ENCODE measurements at regions of chr3 and their contacts with region 1.

Region 1: GRCh38 chr3:195542698-195543499 is at the start of gene PPP1R2:
- DNase-seq: peak; percentile 95
- ATAC-seq: peak; percentile 90
- H3K4me3 ChIP-seq: peak within 1 kb of the TSS; percentile 75 to 95 (median 93)
- H3K4me3 Mint-ChIP-seq: peak within 1 kb of the TSS; percentile 97
- H3K27ac ChIP-seq: peak within 1 kb of the TSS; percentile 96 to 98
- H3K27ac Mint-ChIP-seq: peak within 1 kb of the TSS; percentile 96
- H3K4me1 ChIP-seq: peaks cover 58 to 65% of the 10 kb centered on the region in 2 donors
- H3K4me1 Mint-ChIP-seq: peaks cover 77% of the 10 kb centered on the region
- H3K27me3 ChIP-seq: no peaks in the 10 kb centered on the region
- H3K27me3 Mint-ChIP-seq: no peaks in the 10 kb centered on the region
- CTCF ChIP-seq: no peak
- total RNA-seq, gene PPP1R2: 73.8 and 81.8 TPM in 2 replicates

Region 2: GRCh38 chr3:195522254-195523023 is 20.5 kb before region 1 on chr3:
- CTCF ChIA-PET with region 1: interaction called, 10 read pairs
- POLR2A ChIA-PET with region 1: interaction called, 6 read pairs
- intact Hi-C with region 1: loop called (anchors 2 kb)
- DNase-seq: peak; percentile 63
- ATAC-seq: peak; percentile 33
- H3K4me3 ChIP-seq: no peak overlapping the region
- H3K4me3 Mint-ChIP-seq: no peak overlapping the region
- H3K27ac ChIP-seq: peak overlapping the region in 1 of 2 donors; percentile 34
- H3K27ac Mint-ChIP-seq: peak overlapping the region; percentile 42
- H3K4me1 ChIP-seq: peaks cover 4 to 7% of the 10 kb centered on the region in 2 donors
- H3K4me1 Mint-ChIP-seq: peaks cover 18% of the 10 kb centered on the region
- H3K27me3 ChIP-seq: no peaks in the 10 kb centered on the region
- H3K27me3 Mint-ChIP-seq: no peaks in the 10 kb centered on the region
- CTCF ChIP-seq: peak; percentile 96

Region 3: DNA sequence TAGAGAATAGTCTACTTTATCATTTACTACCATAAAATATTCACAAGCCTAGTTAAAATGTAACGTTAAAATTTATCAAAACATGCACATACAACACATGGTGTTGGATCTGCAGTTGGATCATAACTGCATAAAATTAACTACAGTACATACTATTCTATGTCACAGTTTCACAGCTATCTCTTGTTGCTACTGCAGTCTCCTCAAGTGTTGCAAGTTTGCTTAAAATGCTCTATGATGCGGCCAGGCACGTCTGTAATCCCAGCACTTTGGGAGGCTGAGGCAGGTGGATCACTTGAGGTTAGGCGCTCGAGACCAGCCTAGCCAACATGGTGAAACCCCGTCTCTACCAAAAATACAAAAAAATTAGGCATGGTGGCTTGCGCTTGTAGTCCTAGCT is 10.1 kb before region 1 on chr3:
- CTCF ChIA-PET with region 1: no interaction called
- POLR2A ChIA-PET with region 1: no interaction called
- intact Hi-C with region 1: no loop called
- DNase-seq: no peak
- ATAC-seq: no peak
- H3K4me3 ChIP-seq: no peak overlapping the region
- H3K4me3 Mint-ChIP-seq: no peak overlapping the region
- H3K27ac ChIP-seq: no peak overlapping the region
- H3K27ac Mint-ChIP-seq: peak overlapping the region; percentile 8
- H3K4me1 ChIP-seq: peaks cover 8 to 24% of the 10 kb centered on the region in 2 donors
- H3K4me1 Mint-ChIP-seq: peaks cover 50% of the 10 kb centered on the region
- H3K27me3 ChIP-seq: no peaks in the 10 kb centered on the region
- H3K27me3 Mint-ChIP-seq: no peaks in the 10 kb centered on the region
- CTCF ChIP-seq: no peak

Region 4: DNA sequence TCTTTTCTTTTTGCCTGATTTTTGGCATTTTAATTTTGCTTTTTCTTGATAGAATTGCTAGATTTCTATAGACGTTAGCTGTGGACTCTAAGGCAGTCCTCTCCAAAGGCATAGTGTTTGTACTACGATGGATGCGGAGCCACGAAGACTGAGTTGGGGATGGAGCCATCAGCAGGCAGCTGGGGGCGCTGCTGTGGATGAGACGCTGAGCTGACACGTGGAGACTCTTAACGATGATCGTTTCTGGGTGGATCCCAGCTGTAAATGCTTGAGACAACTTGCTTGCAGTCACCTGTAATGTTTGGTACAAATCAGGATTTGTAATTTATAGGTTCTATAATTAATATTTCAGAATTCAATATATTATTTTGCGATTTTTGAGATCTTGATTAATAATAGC is 13.5 kb after region 1 on chr3:
- CTCF ChIA-PET with region 1: interaction called, 12 read pairs
- POLR2A ChIA-PET with region 1: interaction called, 4 read pairs
- intact Hi-C with region 1: no loop called
- DNase-seq: peak; percentile 30
- ATAC-seq: no peak
- H3K4me3 ChIP-seq: no peak overlapping the region
- H3K4me3 Mint-ChIP-seq: no peak overlapping the region
- H3K27ac ChIP-seq: no peak overlapping the region
- H3K27ac Mint-ChIP-seq: no peak overlapping the region
- H3K4me1 ChIP-seq: peaks cover 3 to 4% of the 10 kb centered on the region in 2 donors
- H3K4me1 Mint-ChIP-seq: peaks cover 13% of the 10 kb centered on the region
- H3K27me3 ChIP-seq: no peaks in the 10 kb centered on the region
- H3K27me3 Mint-ChIP-seq: no peaks in the 10 kb centered on the region
- CTCF ChIP-seq: peak; percentile 17

Region 5: GRCh38 chr3:195583831-195584542 is 41.1 kb after region 1 on chr3 and contains the start of gene APOD:
- CTCF ChIA-PET with region 1: no interaction called
- POLR2A ChIA-PET with region 1: no interaction called
- intact Hi-C with region 1: no loop called
- DNase-seq: no peak
- ATAC-seq: no peak
- H3K4me3 ChIP-seq: no peak within 1 kb of the TSS
- H3K4me3 Mint-ChIP-seq: no peak within 1 kb of the TSS
- H3K27ac ChIP-seq: no peak within 1 kb of the TSS
- H3K27ac Mint-ChIP-seq: no peak within 1 kb of the TSS
- H3K4me1 ChIP-seq: no peaks in the 10 kb centered on the region
- H3K4me1 Mint-ChIP-seq: no peaks in the 10 kb centered on the region
- H3K27me3 ChIP-seq: peaks cover 0 to 19% (median 0%) of the 10 kb centered on the region in 4 experiments
- H3K27me3 Mint-ChIP-seq: no peaks in the 10 kb centered on the region
- CTCF ChIP-seq: no peak
- total RNA-seq, gene APOD: 0.41 and 0.59 TPM in 2 replicates

Region 6: DNA sequence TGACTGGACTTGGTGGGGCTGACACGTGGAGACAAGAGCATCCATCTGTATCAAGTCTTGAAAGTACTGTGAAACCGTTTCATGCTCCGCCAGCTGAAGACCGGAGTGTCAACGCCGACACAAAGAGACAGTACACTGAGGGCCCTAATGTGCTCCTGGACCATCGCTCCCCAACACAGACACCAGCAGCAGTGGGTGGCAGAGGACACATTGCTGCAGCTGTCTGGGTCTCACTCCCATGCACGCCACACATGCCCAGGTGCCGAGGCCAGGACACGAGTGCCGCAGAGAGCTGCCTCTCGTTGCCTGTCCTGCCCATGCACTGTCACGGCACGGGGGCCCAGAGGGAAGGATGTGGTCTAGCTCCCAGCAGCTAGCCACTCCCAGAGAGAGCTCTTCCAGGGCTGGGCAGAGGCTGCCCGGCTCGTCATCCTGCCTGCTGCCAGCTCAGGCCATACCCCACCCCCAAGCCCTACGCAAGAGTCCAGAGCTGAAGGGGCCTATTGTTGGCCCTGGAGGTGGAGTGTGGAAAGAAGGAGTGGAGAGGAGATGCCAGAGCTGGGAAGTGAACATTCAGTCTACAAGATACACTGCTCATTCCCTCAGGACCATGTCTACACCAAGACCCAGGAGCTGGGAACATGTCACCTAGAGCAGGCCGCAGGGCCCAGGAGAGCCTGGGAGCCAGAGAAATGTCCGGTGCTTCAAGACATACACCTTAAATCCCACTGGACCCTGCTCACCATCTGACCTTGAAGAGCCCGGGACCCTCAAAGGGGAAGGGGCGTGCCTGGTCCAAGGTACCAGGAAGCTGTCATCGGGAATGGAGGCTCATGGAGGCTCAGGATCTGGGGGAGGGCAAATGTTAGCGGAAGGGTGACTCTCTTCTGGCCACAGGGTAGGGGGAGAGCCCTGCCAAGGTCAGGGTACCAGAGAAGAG is 357.8 kb after region 1 on chr3:
- CTCF ChIA-PET with region 1: no interaction called
- POLR2A ChIA-PET with region 1: no interaction called
- intact Hi-C with region 1: no loop called
- DNase-seq: peak; percentile 61
- ATAC-seq: peak; percentile 14
- H3K4me3 ChIP-seq: no peak overlapping the region
- H3K4me3 Mint-ChIP-seq: peak overlapping the region; percentile 78
- H3K27ac ChIP-seq: peak overlapping the region; percentile 45 to 85
- H3K27ac Mint-ChIP-seq: peak overlapping the region; percentile 94
- H3K4me1 ChIP-seq: peaks cover 85 to 93% of the 10 kb centered on the region in 2 donors
- H3K4me1 Mint-ChIP-seq: peaks cover 87% of the 10 kb centered on the region
- H3K27me3 ChIP-seq: no peaks in the 10 kb centered on the region
- H3K27me3 Mint-ChIP-seq: no peaks in the 10 kb centered on the region
- CTCF ChIP-seq: no peak

Measured in B cell (primary cell).